ENCODE measurements at regions of chr22 and their contacts with region 1.

Region 1: GRCh38 chr22:42419243-42419881 is 12.8 kb downstream of the NFAM1 start:
- DNase-seq: no peak
- H3K4me3 ChIP-seq: peak overlapping the region in 4 of 59 donors; percentile 6 to 40 (median 30)
- H3K27ac ChIP-seq: no peak overlapping the region
- H3K27me3 ChIP-seq: no peaks in the 10 kb centered on the region
- CTCF ChIP-seq: no peak

Region 2: GRCh38 chr22:42331014-42331413 is 88.3 kb before region 1 on chr22:
- intact Hi-C with region 1: loop called in 1 of 2 experiments (anchors 5 kb)
- DNase-seq: peak in 5 of 10 donors; percentile 53 to 62 (median 59)
- H3K4me3 ChIP-seq: no peak overlapping the region
- H3K27ac ChIP-seq: peak overlapping the region in 4 of 59 donors; percentile 10 to 43 (median 34)
- H3K27me3 ChIP-seq: no peaks in the 10 kb centered on the region
- CTCF ChIP-seq: peak in 1 of 56 donors; percentile 23